AG04450 (cell line): ENCODE measurements at regions of chr20 and their contacts with region 1.

Region 1: DNA sequence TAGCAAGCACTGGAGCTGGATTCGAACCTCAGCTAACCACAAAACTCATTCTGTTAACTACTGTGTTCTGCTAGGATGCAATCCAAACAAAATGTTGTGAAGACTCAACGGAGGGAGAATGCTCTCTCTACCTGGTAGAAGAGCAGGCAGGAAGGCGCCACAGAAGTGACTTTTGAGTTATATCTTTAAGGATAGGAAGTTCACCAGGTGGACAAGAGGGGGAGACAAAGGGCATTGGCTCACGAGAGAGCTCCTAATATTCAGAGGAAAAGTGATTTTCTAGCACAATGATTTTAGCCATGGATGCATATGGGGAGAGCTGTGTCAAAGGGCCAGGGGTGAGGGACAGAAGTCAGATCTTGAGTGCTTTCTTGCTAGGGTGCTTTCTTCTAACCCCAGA is 108.4 kb upstream of the MAFB start:
- DNase-seq: no peak
- H3K4me3 ChIP-seq: no peak overlapping the region
- H3K27ac ChIP-seq: no peak overlapping the region
- H3K27me3 ChIP-seq: no peaks in the 10 kb centered on the region
- CTCF ChIP-seq: peak; percentile 67

Region 2: GRCh38 chr20:40945754-40946450 is 148.5 kb after region 1 on chr20:
- CTCF ChIA-PET with region 1: interaction called, 15 read pairs
- POLR2A ChIA-PET with region 1: no interaction called
- DNase-seq: no peak
- H3K4me3 ChIP-seq: no peak overlapping the region
- H3K27ac ChIP-seq: no peak overlapping the region
- H3K27me3 ChIP-seq: no peaks in the 10 kb centered on the region
- CTCF ChIP-seq: peak; percentile 67

Region 3: DNA sequence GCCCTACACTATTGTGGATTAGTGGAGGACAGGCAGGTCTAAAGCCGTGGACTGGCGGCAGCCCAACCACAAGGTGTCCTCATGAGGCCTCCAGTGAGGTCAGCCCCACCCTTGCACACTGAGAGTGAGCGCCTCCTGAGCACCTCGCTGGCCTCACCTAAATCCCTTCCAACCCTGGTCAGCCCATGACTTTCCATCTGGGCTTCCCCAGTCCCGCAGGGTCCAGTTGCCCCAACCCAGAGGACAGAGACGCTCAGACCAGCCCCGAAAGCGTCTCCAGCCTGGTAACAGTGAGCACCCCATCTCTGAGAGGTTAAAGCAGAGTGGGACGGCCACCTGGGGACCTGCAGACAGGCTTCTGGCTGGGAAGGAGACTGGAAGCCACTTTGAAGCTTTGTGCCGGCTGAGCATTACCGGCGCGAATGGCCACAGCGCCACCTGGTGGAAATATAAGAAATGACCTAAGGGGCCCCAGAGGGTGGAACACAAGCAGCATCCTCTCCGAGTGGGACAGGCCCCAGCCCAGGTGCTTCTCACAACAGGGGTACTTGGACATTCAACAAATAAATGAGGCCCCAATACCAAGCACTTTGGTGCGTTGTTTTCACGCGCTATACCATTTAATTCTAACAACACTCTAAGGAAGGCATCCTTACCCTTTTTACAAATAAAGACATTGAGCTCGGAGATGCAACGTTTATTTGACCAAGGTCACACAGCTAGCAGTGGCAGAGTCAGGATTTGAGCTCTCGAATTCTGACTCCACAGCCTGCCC is 165.5 kb after region 1 on chr20:
- CTCF ChIA-PET with region 1: interaction called, 39 read pairs
- POLR2A ChIA-PET with region 1: no interaction called
- DNase-seq: no peak
- H3K4me3 ChIP-seq: no peak overlapping the region
- H3K27ac ChIP-seq: no peak overlapping the region
- H3K27me3 ChIP-seq: no peaks in the 10 kb centered on the region
- CTCF ChIP-seq: peak; percentile 85